Right ventricle myocardium inferior (tissue), 1 donor: ENCODE measurements at regions of chr6 and their contacts with region 1.

Region 1: DNA sequence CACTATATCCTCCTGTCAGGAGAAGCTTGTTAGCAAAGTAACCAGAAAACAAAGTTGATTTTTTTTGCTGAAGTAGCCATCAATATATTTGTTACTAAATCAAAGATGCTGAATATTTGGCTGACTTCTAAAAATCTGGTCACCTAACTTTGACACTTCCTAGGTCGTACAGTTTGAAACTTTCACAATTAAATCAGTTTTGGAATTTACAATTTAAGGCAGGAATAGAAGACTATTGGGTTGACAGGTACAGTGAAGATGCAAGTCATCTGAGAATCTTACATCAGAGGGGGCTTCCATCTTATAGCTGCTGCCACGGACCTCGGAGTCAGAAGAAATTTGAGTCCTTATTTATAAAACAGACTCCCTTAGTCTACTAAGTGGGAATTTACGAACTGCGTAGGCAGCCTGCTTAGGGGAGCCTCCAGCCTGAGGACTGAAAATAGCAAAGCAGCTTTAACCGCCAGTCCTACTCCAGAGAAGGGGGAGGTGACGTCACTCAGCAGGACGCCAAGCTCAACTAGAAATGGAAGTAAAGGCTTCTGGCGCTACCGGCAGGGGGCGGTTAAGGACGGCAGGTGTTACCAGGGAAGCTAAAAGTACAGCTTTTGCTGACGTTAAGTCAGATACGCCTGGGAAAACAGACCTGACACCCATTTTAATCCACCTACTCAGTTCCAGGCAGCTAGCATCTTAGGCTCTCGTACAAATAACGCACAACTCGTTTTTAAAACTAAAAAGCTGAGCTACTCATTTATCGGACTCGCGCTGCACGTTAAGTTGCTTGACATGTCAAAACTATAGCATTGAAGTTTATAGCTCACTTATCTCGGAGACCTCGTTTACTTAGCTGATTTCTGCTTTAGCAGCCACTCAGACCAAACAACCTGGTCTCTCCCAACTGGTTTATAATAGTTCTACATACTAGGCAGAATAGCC is 61.1 kb upstream of the HFE start:
- DNase-seq: peak; percentile 95
- ATAC-seq: peak; percentile 66

Region 2: DNA sequence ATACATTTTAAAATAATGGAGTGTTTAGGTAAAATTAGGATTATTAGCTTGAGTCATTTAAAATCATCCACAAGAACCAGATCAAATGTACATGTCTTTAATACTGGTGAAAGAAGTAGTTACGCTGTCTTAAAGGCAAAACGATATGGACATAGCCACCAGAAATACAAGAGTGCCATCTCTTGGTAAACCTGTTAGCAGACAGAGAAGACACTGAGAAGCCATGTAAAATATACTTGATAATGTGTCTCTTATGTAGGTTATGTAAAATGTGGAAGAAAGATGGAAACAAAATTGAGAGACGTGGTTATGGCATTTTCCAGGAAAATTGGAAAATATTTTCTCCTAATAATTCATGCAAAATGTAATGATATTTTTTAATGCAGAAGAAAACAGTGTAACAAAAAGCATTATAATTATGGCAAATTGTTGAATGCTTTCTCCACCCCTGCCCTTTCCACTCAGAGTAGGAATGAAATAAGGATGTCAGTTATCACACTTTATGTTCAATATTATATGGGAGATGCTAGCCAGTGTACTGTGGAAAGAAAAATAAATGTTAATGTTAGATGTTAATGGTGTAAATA is 83.5 kb before region 1 on chr6:
- intact Hi-C with region 1: no loop called
- DNase-seq: no peak
- ATAC-seq: no peak

Region 3: GRCh38 chr6:26045065-26045927 is 19.1 kb after region 1 on chr6:
- intact Hi-C with region 1: loop called (anchors 2 kb)
- DNase-seq: peak; percentile 70
- ATAC-seq: peak; percentile 80

Region 4: DNA sequence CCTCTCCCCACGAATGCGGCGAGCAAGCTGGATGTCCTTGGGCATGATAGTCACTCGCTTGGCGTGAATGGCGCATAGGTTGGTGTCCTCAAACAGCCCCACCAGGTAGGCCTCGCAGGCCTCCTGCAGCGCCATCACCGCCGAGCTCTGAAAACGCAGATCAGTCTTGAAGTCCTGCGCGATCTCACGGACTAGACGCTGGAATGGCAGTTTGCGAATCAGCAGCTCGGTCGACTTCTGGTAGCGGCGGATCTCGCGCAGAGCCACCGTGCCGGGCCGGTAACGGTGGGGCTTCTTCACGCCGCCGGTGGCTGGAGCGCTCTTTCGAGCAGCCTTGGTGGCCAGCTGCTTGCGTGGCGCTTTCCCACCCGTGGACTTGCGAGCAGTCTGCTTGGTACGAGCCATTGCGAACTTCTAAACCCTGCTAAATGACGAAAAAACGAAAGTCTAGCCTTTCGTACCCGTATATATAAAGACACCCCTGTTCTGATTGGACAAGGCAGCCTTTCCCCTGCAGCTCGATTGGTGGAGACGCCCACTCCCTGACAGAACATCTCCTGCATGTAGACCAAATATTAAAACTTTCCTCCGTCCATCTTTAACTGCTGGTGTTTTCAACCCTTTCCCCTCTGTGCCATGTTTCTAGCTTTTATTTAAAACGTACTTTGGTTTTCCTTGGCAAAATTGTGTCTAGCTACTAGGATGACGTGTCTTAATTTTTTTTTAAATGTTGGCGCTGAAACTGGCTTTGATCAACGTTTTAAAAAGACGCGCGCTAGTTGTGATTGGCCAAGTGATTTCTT is 170.9 kb after region 1 on chr6:
- intact Hi-C with region 1: loop called (anchors 5 kb)
- DNase-seq: peak; percentile 70
- ATAC-seq: peak; percentile 60

Region 5: DNA sequence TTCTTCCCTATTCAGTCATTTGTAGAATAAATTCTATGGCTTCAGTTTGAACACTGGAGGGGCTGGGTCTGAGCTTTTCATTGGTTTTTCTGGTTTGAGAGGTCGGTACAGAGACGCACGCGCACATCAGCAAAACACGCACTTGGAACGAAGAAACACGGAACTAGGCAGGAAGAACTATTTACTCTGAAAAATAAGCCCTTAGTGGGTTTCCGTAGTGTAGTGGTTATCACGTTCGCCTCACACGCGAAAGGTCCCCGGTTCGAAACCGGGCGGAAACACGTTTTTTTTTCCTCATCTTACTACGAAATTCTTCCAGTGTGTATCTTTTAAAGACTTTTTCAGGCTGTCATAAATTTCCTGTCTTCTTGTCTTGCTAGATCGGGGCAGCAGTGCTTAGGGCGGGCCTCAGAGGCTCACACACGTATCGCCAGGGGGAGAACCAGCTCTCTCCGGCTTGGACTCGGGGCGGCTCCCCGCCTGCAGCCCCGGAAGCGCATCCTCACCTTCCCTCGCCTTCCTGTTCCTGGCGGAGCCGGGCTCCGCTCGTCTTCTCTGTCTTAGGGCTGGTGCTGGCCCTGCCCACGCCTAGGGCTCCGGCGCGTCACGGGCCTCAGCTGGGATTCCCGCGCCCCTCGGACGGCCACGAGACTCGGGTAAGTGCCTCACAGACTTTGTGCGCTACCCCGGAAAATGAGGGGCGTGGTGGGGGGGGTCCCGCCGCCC is 511.8 kb after region 1 on chr6 and contains the start of gene HMGN4:
- intact Hi-C with region 1: loop called (anchors 10 kb)
- DNase-seq: peak; percentile 90
- ATAC-seq: peak; percentile 89
- total RNA-seq, gene HMGN4: 29.0 TPM

Region 6: GRCh38 chr6:27479319-27480182 is 1453.4 kb after region 1 on chr6:
- intact Hi-C with region 1: loop called (anchors 5 kb)
- DNase-seq: peak; percentile 73
- ATAC-seq: peak; percentile 93